MCF 10A (cell line): ENCODE measurements at regions of chr1 and their contacts with region 1.

Region 1: DNA sequence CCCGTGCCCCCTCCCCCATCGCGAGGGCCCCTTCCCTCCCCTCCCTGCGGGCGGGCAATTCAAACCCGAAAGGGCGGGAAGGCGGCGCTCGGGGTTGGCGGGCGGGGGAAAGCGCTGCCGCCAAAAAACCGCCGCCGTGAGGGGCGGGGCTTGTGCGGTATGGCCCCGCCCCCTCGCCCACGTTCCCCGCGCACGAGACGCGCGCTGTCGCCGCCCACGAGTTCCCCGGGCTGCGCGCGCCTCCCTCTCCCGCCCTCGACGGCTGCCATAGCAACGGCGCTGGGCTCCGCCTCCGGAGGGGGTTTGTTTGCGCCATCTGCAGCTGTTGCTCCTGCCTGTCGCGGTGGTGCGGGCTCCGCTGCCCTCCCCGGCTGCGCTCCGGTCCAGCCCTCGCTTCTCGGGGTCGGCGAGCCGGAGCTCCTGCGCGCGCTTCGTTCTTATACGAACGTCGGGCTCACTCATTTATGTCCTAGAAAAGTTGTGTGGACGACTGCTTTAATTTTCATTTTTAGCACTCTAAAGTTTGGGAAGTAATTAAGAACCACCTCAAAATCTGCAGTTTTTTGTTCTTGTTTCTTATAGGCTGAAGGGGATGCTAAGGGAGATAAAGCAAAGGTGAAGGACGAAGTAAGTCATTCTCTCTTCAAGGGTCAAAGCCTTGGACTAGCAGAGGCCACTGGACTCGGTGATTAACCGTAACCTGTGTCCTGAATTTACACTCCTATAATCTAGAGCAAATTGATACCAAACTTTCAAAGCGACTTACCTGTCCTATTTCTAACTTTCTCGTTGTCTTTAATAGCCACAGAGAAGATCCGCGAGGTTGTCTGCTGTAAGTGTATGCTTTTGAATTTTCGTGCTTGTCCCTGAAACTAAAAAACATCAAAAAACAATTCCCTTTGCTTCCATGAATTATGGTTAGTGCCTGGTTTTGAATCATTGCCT is 933 bp downstream of the HMGN2 start:
- DNase-seq: peak; percentile 91
- H3K4me3 Mint-ChIP-seq: peak overlapping the region; percentile 85
- H3K27ac Mint-ChIP-seq: peak overlapping the region; percentile 49
- H3K4me1 Mint-ChIP-seq: peaks cover 29% of the 10 kb centered on the region
- H3K27me3 Mint-ChIP-seq: no peaks in the 10 kb centered on the region
- CTCF ChIP-seq: no peak

Region 2: GRCh38 chr1:26431979-26432695 is 41.0 kb before region 1 on chr1 and contains the start of gene DHDDS:
- CTCF ChIA-PET with region 1: interaction called, 3 read pairs
- POLR2A ChIA-PET with region 1: interaction called, 41 read pairs
- intact Hi-C with region 1: loop called (anchors 5 kb)
- DNase-seq: peak; percentile 97
- H3K4me3 Mint-ChIP-seq: peak within 1 kb of the TSS; percentile 94
- H3K27ac Mint-ChIP-seq: peak within 1 kb of the TSS; percentile 88
- H3K4me1 Mint-ChIP-seq: peaks cover 12% of the 10 kb centered on the region
- H3K27me3 Mint-ChIP-seq: no peaks in the 10 kb centered on the region
- CTCF ChIP-seq: no peak
- total RNA-seq, gene DHDDS: 48.2 and 56.2 TPM in 2 replicates

Region 3: DNA sequence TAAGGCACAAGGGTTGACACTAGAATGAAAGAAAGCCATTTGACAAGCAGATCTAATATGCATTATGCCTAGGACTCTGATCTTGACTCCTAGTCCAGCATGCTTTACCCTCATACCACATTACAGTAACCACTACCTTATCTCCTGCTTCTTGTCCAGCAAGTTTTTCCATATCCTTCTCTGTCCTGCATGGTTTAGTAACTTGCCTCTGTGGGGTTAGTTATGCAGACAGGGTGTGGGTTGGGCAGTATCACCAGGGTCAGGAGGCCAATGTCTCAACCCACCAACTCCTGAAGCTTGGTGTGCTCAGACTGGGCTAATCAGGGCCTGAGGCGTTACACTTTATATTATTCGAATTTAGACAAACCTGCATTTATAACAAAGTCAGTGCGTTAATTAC is 22.3 kb before region 1 on chr1:
- CTCF ChIA-PET with region 1: interaction called, 3 read pairs
- POLR2A ChIA-PET with region 1: interaction called, 13 read pairs
- intact Hi-C with region 1: no loop called
- DNase-seq: no peak
- H3K4me3 Mint-ChIP-seq: no peak overlapping the region
- H3K27ac Mint-ChIP-seq: no peak overlapping the region
- H3K4me1 Mint-ChIP-seq: no peaks in the 10 kb centered on the region
- H3K27me3 Mint-ChIP-seq: no peaks in the 10 kb centered on the region
- CTCF ChIP-seq: no peak

Region 4: DNA sequence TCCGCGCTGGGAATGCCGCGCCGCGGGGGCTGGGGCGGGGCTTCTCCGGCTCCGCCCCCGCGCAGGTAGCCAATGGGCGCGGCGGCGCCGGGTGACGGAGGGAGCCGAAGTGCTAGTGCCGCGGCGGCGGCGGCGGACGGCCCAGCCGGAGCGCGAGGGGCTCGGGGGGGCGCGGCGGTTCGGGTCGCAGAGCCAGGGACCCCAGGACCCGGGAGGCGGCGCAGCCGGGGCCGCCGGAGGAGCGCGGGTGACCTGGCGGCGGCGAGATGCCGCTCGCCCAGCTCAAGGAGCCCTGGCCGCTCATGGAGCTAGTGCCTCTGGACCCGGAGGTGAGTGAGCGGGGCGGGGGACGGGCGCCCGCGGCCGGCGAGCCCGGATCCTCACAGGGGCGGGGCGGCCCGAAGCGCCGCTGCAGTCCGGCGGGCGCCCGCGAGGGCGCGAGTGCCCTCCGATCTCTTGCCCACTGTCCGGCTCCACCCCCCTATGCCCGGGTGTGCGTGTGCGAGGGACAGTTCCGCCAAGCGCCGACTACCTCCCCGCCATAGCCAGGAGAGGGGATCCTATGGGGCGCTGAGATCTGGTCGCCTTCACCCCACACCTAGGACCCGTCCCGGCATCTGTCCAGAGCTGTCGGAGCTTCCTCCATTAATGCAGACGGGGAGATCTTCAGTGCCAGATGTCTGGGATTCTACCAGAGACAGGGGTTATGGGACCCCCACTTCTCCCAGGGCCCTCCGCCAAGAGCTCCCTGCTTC is 56.7 kb after region 1 on chr1 and contains the start of gene RPS6KA1:
- CTCF ChIA-PET with region 1: no interaction called
- POLR2A ChIA-PET with region 1: interaction called, 29 read pairs
- intact Hi-C with region 1: loop called (anchors 2 kb)
- DNase-seq: peak; percentile 56
- H3K4me3 Mint-ChIP-seq: peak within 1 kb of the TSS; percentile 89
- H3K27ac Mint-ChIP-seq: peak within 1 kb of the TSS; percentile 90
- H3K4me1 Mint-ChIP-seq: peaks cover 14% of the 10 kb centered on the region
- H3K27me3 Mint-ChIP-seq: no peaks in the 10 kb centered on the region
- CTCF ChIP-seq: no peak
- total RNA-seq, gene RPS6KA1: 43.9 and 50.9 TPM in 2 replicates